HEK293 (cell line): ENCODE measurements at regions of chr20 and their contacts with region 1.

Region 1: DNA sequence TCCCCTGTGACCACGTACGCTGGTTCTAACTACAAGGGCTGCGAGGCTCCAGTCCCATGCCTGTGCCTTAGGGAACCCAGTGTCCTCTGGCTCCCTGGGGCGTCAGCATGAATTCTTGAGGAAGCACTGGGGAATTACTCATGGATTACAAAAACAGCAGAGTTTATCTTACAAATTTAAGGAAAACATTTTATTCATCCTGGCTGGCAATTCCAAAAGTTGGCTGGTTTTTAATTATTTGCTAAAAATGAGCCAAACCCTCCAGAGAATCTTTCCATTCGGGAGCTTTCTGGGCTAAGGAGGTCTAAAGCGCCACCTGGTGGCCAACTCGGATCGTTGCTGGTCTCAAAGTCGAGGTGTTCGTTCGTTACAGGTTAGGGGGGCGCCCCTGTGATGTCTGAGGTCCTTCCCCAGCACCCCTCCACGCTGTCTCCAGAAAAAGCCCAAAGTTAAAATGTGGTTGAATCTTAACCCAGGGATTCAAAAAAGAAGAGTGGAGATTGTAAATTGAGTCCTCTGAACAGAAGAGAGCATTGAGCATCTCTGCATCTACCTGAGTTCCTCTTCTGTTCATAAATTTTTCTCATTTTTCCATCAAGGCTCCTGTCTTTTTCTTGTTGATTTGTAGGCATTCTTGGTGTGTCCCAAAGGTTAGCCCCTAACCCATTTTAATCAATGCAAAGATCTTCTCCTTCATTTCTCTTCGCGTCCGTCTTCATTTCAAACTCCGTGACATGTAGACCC is 99.4 kb downstream of the BFSP1 start:
- H3K4me3 ChIP-seq: no peak overlapping the region
- H3K27ac ChIP-seq: no peak overlapping the region
- H3K4me1 ChIP-seq: no peaks in the 10 kb centered on the region
- CTCF ChIP-seq: 0 out of 2 replicates have a peak, but pooled peaks have one; percentile 15

Region 2: DNA sequence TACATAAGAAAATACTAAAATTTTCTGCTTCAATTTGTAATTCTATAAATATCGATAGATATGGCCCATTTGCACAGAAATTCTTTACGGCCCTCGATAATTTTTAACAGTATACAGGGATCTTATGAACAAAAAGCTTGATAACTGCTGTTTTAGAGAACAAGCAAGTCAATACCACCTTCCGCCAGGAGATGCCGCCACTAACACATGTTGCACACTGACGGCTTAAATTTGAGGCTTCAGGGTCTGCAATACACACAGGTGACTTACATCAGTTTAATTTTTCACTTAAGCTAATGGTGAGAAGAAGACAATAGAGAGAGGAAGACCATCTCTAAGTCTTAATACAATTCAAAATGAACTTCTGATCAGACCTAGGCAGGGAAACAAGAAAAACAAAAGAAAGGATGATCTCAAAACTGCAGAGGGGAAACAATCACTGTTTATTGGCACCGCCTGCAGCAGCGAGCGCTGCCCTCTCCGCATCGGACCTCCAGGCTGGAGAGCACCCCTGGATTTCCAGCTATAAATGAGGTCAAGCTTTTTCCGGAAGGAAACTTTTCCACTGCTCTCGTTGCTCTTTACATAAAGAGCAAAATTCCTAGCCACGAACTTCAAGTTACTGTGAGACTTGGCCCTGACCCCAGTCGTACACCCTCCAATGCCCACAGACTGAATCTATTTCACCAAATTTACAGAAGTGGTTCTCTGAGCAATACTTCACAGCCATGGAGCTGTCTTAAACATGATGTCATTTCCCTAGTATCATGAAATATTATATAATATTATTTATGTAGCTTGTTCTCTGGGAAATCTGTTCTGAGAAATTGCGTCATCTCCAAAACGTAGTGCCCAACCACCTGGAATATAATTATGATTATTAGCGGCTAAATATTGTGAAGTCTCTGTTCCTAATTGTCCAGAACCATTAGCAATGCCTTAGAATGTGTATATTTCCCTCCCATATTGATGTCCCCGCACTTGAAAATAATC is 629.6 kb before region 1 on chr20:
- CTCF ChIA-PET with region 1: interaction called, 92 read pairs
- POLR2A ChIA-PET with region 1: no interaction called
- H3K4me3 ChIP-seq: no peak overlapping the region
- H3K27ac ChIP-seq: no peak overlapping the region
- H3K4me1 ChIP-seq: no peaks in the 10 kb centered on the region
- CTCF ChIP-seq: no peak

Region 3: DNA sequence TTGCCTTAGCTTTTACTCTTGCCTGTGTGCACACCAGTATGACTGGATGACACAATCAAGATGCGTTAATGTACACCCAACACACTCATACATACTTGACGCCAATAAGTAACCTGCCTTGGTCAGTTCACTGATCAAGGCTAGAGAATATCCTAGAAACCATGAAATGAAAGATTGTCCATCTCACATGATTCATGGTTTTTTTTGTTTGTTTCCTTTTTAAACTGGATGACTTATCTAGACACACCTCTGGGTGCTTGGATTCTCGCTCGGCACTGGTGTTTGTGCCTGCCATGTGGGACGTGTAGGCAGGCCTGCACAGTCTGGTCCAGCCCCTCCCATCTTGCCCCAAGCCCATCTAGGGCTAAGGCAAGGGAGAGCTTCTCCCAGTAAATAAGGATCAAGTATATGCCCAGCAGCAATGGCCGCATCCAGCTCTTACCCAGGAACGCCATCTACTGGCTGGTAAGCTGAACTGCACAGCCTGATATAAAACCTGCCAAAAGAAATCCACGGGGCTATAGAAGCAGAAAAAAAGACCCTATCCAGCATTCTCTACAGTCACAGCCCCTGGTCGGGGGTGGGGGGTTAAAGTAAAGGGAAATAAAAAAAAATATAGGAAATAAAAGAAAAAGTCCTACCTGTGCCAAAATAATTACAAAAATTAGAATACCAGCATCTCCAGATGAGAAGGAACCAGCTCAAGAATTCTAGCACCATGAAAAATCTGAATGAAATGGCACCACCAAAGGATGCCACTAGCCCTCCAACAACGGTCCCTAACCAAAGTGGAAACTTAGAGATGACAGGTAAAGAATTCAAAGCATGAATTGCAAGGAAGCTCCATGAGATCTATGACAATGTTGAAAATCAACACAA is 610.3 kb before region 1 on chr20:
- CTCF ChIA-PET with region 1: interaction called, 12 read pairs
- POLR2A ChIA-PET with region 1: no interaction called
- H3K4me3 ChIP-seq: no peak overlapping the region
- H3K27ac ChIP-seq: no peak overlapping the region
- H3K4me1 ChIP-seq: no peaks in the 10 kb centered on the region
- CTCF ChIP-seq: no peak

Region 4: GRCh38 chr20:17421493-17421892 is 10.3 kb before region 1 on chr20:
- CTCF ChIA-PET with region 1: interaction called, 39 read pairs
- POLR2A ChIA-PET with region 1: no interaction called
- H3K4me3 ChIP-seq: no peak overlapping the region
- H3K27ac ChIP-seq: no peak overlapping the region
- H3K4me1 ChIP-seq: no peaks in the 10 kb centered on the region
- CTCF ChIP-seq: no peak

Region 5: DNA sequence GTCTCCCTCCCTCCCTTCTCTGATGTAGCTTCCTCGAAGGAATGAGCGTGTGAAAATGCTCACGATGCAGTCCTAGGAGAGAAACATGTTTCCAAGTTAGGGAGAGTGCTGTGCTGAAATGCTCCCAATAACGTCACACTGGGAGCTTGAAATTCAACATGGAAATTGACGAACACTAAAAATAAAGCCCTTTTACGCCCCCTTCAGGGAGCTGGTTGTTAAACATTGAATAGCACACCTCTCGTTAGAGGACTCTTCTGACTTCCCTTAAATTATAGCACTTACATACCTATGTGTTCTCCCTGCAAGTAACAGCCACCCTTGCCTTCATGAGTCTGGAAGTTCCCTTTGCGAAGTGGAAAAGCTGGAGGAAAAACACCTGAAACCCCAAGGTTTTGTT is 10.8 kb after region 1 on chr20:
- CTCF ChIA-PET with region 1: interaction called, 11 read pairs
- POLR2A ChIA-PET with region 1: no interaction called
- H3K4me3 ChIP-seq: no peak overlapping the region
- H3K27ac ChIP-seq: no peak overlapping the region
- H3K4me1 ChIP-seq: no peaks in the 10 kb centered on the region
- CTCF ChIP-seq: no peak